ENCODE measurements at regions of chr19 and their contacts with region 1.

Region 1: DNA sequence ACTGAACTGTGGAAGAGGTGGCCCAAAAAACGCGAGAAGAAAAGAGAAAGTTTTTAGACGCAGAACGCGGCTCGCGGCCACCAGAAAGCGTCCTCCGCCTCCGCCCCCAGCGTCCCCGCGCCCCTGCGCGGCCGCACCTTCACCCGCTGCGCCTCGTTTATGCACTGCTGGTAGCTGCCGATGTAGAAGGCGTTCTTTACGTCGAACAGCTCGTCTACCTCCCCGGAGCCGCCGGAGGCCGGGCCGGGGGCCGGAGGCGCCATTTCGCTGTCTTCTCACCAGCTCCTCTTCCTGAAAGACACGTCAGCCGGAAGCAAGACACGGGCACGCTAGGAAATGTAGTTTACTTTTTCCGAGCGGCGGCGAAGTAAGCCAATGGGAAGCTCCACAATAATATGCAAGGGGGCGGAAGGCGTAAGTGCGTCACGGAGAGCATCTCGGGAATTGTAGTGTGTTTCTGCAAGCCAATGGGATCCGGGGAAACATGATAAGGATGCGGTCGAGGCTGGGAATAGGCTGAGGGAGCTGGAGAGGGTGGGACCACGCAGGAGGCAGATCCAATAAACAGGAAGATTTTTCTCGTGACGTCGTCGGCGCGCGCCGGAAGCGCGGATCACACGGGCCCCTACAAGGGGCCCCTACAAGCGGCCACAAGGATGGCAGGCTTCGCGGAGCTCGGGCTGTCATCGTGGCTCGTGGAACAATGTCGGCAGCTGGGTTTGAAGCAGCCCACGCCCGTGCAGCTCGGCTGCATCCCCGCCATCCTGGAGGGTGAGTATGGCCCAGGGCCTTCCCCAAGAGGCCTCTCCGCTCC is at the starts of genes COPE and DDX49:
- DNase-seq: peak; percentile 94
- ATAC-seq: peak; percentile 96
- H3K4me3 Mint-ChIP-seq: peak within 1 kb of the TSS; percentile 91
- H3K27ac Mint-ChIP-seq: peak within 1 kb of the TSS; percentile 60
- H3K4me1 Mint-ChIP-seq: peaks cover 46% of the 10 kb centered on the region
- H3K27me3 Mint-ChIP-seq: no peaks in the 10 kb centered on the region
- CTCF ChIP-seq: no peak
- total RNA-seq, gene COPE: 182 and 253 TPM in 2 replicates
- total RNA-seq, gene DDX49: 49.0 and 53.6 TPM in 2 replicates

Region 2: GRCh38 chr19:18571564-18572300 is 347.6 kb before region 1 on chr19 and contains the start of gene UBA52:
- CTCF ChIA-PET with region 1: no interaction called
- POLR2A ChIA-PET with region 1: interaction called, 23 read pairs
- intact Hi-C with region 1: loop called (anchors 1 kb)
- DNase-seq: peak; percentile 100
- ATAC-seq: peak; percentile 93
- H3K4me3 Mint-ChIP-seq: peak within 1 kb of the TSS; percentile 94
- H3K27ac Mint-ChIP-seq: peak within 1 kb of the TSS; percentile 93
- H3K4me1 Mint-ChIP-seq: peaks cover 30% of the 10 kb centered on the region
- H3K27me3 Mint-ChIP-seq: no peaks in the 10 kb centered on the region
- CTCF ChIP-seq: no peak
- total RNA-seq, gene UBA52: 1,962 and 2,164 TPM in 2 replicates

Region 3: DNA sequence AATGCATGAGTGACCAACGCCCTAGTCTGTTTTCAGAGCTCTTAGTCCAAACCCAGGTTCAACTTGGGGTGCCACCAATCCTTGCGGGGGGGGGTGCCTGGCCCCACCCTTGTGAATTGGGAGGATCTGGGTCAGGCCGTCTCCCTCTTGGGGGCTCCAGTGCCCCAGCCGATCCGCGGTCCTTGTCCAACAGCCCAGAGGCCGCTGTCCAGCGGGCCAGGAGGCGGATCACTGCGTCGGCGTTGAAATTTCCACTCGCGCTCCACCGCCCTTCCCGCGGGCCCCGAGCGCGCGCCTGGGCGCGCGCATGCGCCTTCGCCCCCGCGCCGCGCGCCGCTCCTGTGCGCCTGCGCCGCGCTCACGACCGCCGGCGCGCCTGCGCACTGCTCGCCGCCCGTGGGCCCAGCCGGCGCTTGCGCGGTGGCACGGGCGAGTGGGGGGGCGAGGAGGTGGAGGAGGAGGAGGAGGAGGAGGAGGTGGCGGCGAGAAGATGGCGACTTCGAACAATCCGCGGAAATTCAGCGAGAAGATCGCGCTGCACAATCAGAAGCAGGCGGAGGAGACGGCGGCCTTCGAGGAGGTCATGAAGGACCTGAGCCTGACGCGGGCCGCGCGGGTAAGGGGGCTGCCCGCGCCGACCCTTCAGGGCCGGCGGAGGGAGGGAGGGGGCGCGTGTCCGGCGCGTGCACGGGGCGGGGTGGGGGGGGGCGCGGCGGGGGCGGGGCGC is 235.9 kb before region 1 on chr19 and contains the start of gene CRTC1:
- CTCF ChIA-PET with region 1: no interaction called
- POLR2A ChIA-PET with region 1: no interaction called
- intact Hi-C with region 1: loop called (anchors 5 kb)
- DNase-seq: peak; percentile 96
- ATAC-seq: peak; percentile 87
- H3K4me3 Mint-ChIP-seq: peak within 1 kb of the TSS; percentile 92
- H3K27ac Mint-ChIP-seq: peak within 1 kb of the TSS; percentile 95
- H3K4me1 Mint-ChIP-seq: peaks cover 31% of the 10 kb centered on the region
- H3K27me3 Mint-ChIP-seq: no peaks in the 10 kb centered on the region
- CTCF ChIP-seq: no peak
- total RNA-seq, gene CRTC1: 13.1 and 15.5 TPM in 2 replicates

Region 4: GRCh38 chr19:18899317-18900219 is 19.7 kb before region 1 on chr19:
- CTCF ChIA-PET with region 1: no interaction called
- POLR2A ChIA-PET with region 1: interaction called, 11 read pairs
- intact Hi-C with region 1: no loop called
- DNase-seq: no peak
- ATAC-seq: no peak
- H3K4me3 Mint-ChIP-seq: no peak overlapping the region
- H3K27ac Mint-ChIP-seq: no peak overlapping the region
- H3K4me1 Mint-ChIP-seq: peaks cover 17% of the 10 kb centered on the region
- H3K27me3 Mint-ChIP-seq: peaks cover 13% of the 10 kb centered on the region
- CTCF ChIP-seq: no peak

Region 5: GRCh38 chr19:19063183-19064097 is 144.1 kb after region 1 on chr19 and contains the start of gene SLC25A42:
- CTCF ChIA-PET with region 1: no interaction called
- POLR2A ChIA-PET with region 1: interaction called, 4 read pairs
- intact Hi-C with region 1: loop called (anchors 5 kb)
- DNase-seq: peak; percentile 96
- ATAC-seq: peak; percentile 89
- H3K4me3 Mint-ChIP-seq: peak within 1 kb of the TSS; percentile 88
- H3K27ac Mint-ChIP-seq: peak within 1 kb of the TSS; percentile 89
- H3K4me1 Mint-ChIP-seq: peaks cover 52% of the 10 kb centered on the region
- H3K27me3 Mint-ChIP-seq: no peaks in the 10 kb centered on the region
- CTCF ChIP-seq: no peak
- total RNA-seq, gene SLC25A42: 14.2 and 17.5 TPM in 2 replicates

Region 6: DNA sequence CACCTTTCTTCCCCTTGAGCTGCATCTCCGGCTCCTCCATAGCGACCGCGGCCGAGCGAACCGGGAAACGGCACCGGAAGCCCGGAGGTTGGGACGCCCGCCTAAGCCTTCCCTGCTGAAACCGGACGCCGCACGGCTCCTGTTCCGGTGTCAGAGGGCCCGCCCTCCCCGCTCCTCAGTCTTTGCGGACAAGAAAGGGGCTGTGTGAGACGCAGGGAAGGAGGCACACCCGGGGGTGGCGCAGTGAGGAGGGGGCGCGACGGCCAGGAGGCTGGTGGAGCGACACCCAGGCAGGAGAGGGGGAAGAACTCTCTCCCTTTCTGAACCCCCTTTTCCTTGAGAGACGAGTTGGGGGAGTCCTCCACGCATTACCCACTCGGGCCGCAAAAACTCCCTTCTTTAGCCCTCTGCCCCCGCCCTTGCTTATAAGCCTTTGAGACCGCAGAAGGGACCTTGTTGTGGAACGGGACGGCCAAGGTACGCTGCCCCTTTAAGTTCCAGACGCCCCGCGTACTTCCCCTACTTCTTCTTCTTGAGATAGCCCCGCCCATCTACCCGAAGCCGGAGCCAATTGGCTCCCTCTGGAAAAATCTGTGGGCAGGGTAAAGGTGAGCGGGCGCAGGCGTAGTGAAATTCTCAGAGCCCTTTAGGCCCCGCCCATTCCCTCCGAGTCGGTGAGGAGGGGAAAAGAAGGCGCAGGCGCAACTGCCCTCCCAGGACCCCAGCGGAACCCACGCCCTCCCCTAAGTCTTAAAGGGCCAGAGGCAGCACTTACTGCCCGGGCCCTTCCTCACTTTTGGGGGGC is 273.0 kb after region 1 on chr19 and contains the starts of genes BORCS8 and RFXANK:
- CTCF ChIA-PET with region 1: no interaction called
- POLR2A ChIA-PET with region 1: no interaction called
- intact Hi-C with region 1: loop called (anchors 1 kb)
- DNase-seq: peak; percentile 91
- ATAC-seq: peak; percentile 85
- H3K4me3 Mint-ChIP-seq: peak within 1 kb of the TSS; percentile 99
- H3K27ac Mint-ChIP-seq: peak within 1 kb of the TSS; percentile 99
- H3K4me1 Mint-ChIP-seq: peaks cover 49% of the 10 kb centered on the region
- H3K27me3 Mint-ChIP-seq: no peaks in the 10 kb centered on the region
- CTCF ChIP-seq: no peak
- total RNA-seq, gene BORCS8: 51.8 and 52.3 TPM in 2 replicates
- total RNA-seq, gene RFXANK: 95.4 and 96.9 TPM in 2 replicates